ENCODE measurements at regions of chr15 and their contacts with region 1.

Region 1: DNA sequence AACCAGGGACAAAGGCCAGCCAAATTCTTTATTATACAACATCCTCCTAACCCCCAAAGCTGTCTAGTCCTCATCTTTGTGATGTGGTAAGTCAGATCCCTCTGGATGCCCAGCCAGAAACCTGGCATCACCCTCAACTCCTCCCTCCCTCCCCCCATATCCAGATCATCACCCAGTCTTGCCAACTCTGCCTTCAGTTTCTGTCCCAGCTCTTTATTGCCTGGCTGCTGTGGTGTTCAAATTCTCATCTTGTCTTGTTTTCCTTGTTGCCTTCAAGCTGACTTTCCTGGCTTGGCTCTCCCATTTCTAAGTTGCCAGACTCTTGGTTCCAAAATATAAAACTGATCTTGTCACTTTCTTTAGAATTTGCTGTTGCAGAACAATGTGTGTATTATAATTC is 28.6 kb downstream of the MAP2K1 start:
- DNase-seq: no peak
- ATAC-seq: no peak
- H3K4me3 Mint-ChIP-seq: no peak overlapping the region
- H3K27ac Mint-ChIP-seq: no peak overlapping the region
- H3K4me1 Mint-ChIP-seq: peaks cover 60% of the 10 kb centered on the region
- H3K27me3 Mint-ChIP-seq: no peaks in the 10 kb centered on the region
- CTCF ChIP-seq: no peak

Region 2: DNA sequence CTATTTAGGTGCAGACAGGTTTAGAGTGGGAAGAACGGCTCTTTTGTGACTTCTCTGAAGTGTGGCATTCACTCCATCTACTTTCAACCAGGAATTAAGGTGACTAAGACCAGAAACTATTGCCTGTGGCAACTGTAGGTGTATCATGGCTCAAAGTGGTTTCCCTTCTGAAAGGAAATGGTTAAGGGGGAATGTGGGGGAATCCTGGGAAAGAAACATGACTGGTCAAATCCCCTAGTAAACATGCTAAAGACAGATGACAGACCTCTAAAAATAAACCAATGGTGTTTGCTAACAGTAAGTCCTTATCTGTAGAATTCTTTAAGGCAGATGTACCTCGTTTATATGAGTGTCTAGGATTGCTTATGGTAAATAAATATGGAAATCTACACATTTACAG is 218.8 kb before region 1 on chr15:
- CTCF ChIA-PET with region 1: no interaction called
- POLR2A ChIA-PET with region 1: no interaction called
- intact Hi-C with region 1: no loop called
- DNase-seq: no peak
- ATAC-seq: no peak
- H3K4me3 Mint-ChIP-seq: no peak overlapping the region
- H3K27ac Mint-ChIP-seq: no peak overlapping the region
- H3K4me1 Mint-ChIP-seq: no peaks in the 10 kb centered on the region
- H3K27me3 Mint-ChIP-seq: peaks cover 1% of the 10 kb centered on the region
- CTCF ChIP-seq: no peak

Region 3: GRCh38 chr15:66231394-66232266 is 183.7 kb before region 1 on chr15:
- CTCF ChIA-PET with region 1: no interaction called
- POLR2A ChIA-PET with region 1: no interaction called
- intact Hi-C with region 1: no loop called
- DNase-seq: no peak
- ATAC-seq: no peak
- H3K4me3 Mint-ChIP-seq: no peak overlapping the region
- H3K27ac Mint-ChIP-seq: no peak overlapping the region
- H3K4me1 Mint-ChIP-seq: no peaks in the 10 kb centered on the region
- H3K27me3 Mint-ChIP-seq: peaks cover 5% of the 10 kb centered on the region
- CTCF ChIP-seq: no peak

Region 4: DNA sequence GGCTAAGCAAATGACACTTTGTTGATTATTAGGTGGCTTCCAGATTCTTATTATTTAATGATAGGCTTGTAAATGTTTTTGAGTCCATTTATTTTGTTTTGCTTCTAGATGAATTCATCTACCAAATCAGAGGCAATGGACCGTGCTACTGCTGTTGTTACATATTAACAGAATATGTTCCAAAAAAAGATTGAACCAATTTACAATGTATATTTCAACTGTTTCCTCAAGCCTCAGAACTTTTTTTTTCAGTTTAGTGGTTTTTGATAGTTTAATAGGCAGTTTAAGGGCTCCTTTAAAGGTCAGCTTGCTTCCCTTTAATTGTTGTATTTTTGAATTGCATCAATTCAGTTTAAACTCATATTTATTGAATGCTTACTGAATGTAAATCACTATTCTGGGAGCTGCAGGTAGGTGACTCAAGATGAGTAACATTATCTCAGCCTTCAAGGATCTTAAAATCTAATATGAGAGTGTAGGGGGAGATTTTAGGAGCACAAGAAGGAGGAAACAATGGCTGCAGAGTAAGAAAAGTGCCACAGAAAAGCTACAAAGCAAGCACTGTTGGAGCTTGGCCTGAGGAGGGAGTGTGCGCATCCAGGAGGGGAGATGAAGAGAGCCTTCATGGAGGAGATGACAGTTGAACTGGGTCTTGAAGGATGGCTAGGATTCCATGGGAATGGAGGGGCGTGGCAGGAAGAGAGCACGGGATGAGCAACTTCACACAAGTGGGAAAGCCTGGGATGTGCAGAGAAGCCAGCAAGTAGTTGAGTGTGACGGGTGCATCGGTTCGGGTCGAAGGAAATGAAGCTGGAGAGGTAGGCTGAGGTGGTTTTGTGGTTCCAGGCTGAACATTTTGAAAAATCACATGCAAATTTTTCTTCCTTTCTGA is 14.0 kb before region 1 on chr15:
- CTCF ChIA-PET with region 1: interaction called, 18 read pairs
- POLR2A ChIA-PET with region 1: interaction called, 5 read pairs
- intact Hi-C with region 1: no loop called
- DNase-seq: peak; percentile 49
- ATAC-seq: peak; percentile 74
- H3K4me3 Mint-ChIP-seq: peak overlapping the region; percentile 40
- H3K27ac Mint-ChIP-seq: peak overlapping the region; percentile 40
- H3K4me1 Mint-ChIP-seq: peaks cover 70% of the 10 kb centered on the region
- H3K27me3 Mint-ChIP-seq: no peaks in the 10 kb centered on the region
- CTCF ChIP-seq: no peak